T-cell (primary cell): ENCODE measurements at regions of chr3 and their contacts with region 1.

Region 1: GRCh38 chr3:33131331-33132018 is 17.7 kb downstream of the CRTAP start:
- DNase-seq: peak in 15 of 35 experiments; percentile 6 to 64 (median 18)
- ATAC-seq: peak in 3 of 4 experiments; percentile 58 to 72 (median 63)
- H3K4me3 ChIP-seq: no peak overlapping the region
- H3K4me3 Mint-ChIP-seq: no peak overlapping the region
- H3K27ac ChIP-seq: no peak overlapping the region
- H3K27ac Mint-ChIP-seq: no peak overlapping the region
- H3K4me1 ChIP-seq: peaks cover 0 to 2% of the 10 kb centered on the region in 2 experiments
- H3K4me1 Mint-ChIP-seq: peaks cover 0 to 7% (median 4%) of the 10 kb centered on the region in 3 donors
- H3K27me3 ChIP-seq: no peaks in the 10 kb centered on the region
- H3K27me3 Mint-ChIP-seq: no peaks in the 10 kb centered on the region

Region 2: DNA sequence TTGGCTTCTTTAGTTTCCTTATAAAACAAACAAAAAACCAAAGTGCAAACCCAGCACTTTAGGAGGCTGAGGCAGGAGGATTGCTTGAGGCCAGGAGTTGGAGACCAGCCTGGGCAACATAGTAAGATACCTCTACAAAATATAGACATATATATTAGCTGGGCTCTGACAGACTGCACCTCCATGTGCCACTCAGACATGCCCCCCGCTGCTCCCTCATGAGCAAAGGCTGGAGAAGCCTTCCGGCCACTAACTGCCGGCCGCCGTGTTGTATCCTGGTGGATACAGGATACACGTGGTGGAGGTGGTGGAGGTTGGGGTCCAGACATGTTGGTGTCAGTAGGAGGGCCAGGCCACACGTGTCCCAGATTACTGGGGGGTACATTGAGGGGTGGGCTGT is 209.4 kb before region 1 on chr3:
- CTCF ChIA-PET with region 1: no interaction called
- POLR2A ChIA-PET with region 1: no interaction called
- DNase-seq: no peak
- ATAC-seq: no peak
- H3K4me3 ChIP-seq: no peak overlapping the region
- H3K4me3 Mint-ChIP-seq: no peak overlapping the region
- H3K27ac ChIP-seq: no peak overlapping the region
- H3K27ac Mint-ChIP-seq: no peak overlapping the region
- H3K4me1 ChIP-seq: no peaks in the 10 kb centered on the region
- H3K4me1 Mint-ChIP-seq: no peaks in the 10 kb centered on the region
- H3K27me3 ChIP-seq: peaks cover 0 to 3% of the 10 kb centered on the region in 2 experiments
- H3K27me3 Mint-ChIP-seq: peaks cover 1 to 4% of the 10 kb centered on the region in 2 donors

Region 3: GRCh38 chr3:33096093-33096868 is 35.2 kb before region 1 on chr3:
- CTCF ChIA-PET with region 1: interaction called in 1 of 2 experiments, 4 read pairs
- POLR2A ChIA-PET with region 1: interaction called in 1 of 2 experiments, 10 read pairs
- DNase-seq: peak in 32 of 35 experiments; percentile 10 to 61 (median 32)
- ATAC-seq: peak; percentile 61 to 67 (median 66)
- H3K4me3 ChIP-seq: peak overlapping the region; percentile 89 to 98
- H3K4me3 Mint-ChIP-seq: peak overlapping the region; percentile 94 to 95 (median 95)
- H3K27ac ChIP-seq: peak overlapping the region; percentile 67
- H3K27ac Mint-ChIP-seq: peak overlapping the region; percentile 89 to 90
- H3K4me1 ChIP-seq: peaks cover 7 to 27% of the 10 kb centered on the region in 2 experiments
- H3K4me1 Mint-ChIP-seq: peaks cover 35 to 50% (median 37%) of the 10 kb centered on the region in 3 donors
- H3K27me3 ChIP-seq: no peaks in the 10 kb centered on the region
- H3K27me3 Mint-ChIP-seq: no peaks in the 10 kb centered on the region